ENCODE measurements at regions of chr22 and their contacts with region 1.

Region 1: GRCh38 chr22:42473484-42474193 is 41.4 kb upstream of the NFAM1 start:
- DNase-seq: peak; percentile 56
- H3K4me3 ChIP-seq: no peak overlapping the region
- H3K27ac ChIP-seq: no peak overlapping the region
- H3K4me1 ChIP-seq: no peaks in the 10 kb centered on the region
- H3K27me3 ChIP-seq: peaks cover 2 to 4% of the 10 kb centered on the region in 2 experiments
- CTCF ChIP-seq: peak; percentile 51 to 56
- POLR2A ChIP-seq: no peak

Region 2: DNA sequence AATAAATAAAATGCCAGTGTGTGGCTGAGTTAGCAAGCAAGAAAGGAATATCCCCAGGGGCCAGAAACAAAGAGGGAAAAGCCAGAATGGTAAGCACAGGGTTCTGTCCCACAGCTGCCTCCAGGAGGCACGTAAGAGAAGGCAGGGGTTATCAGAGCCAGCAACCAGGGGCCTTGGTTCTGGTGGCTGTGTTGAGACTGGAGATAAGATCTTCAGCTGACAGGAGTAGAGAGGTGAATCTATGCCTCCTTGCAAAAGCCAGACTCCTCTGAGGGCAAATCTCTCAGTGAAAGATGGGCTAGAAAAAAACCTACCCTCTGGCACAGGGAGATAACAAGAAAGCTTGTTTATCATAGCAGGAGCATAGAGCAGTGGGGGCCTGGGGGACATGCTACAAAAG is 11.6 kb before region 1 on chr22:
- CTCF ChIA-PET with region 1: interaction called, 11 read pairs
- POLR2A ChIA-PET with region 1: no interaction called
- dilution Hi-C with region 1: no loop called
- intact Hi-C with region 1: no loop called
- DNase-seq: no peak
- H3K4me3 ChIP-seq: no peak overlapping the region
- H3K27ac ChIP-seq: no peak overlapping the region
- H3K4me1 ChIP-seq: no peaks in the 10 kb centered on the region
- H3K27me3 ChIP-seq: peaks cover 15 to 16% of the 10 kb centered on the region in 2 experiments
- CTCF ChIP-seq: no peak
- POLR2A ChIP-seq: no peak